Activated B cell treated with CpG ODN at 0.5 μM for 24 hours (primary cell): ENCODE measurements at regions of chr2 and their contacts with region 1.

Region 1: DNA sequence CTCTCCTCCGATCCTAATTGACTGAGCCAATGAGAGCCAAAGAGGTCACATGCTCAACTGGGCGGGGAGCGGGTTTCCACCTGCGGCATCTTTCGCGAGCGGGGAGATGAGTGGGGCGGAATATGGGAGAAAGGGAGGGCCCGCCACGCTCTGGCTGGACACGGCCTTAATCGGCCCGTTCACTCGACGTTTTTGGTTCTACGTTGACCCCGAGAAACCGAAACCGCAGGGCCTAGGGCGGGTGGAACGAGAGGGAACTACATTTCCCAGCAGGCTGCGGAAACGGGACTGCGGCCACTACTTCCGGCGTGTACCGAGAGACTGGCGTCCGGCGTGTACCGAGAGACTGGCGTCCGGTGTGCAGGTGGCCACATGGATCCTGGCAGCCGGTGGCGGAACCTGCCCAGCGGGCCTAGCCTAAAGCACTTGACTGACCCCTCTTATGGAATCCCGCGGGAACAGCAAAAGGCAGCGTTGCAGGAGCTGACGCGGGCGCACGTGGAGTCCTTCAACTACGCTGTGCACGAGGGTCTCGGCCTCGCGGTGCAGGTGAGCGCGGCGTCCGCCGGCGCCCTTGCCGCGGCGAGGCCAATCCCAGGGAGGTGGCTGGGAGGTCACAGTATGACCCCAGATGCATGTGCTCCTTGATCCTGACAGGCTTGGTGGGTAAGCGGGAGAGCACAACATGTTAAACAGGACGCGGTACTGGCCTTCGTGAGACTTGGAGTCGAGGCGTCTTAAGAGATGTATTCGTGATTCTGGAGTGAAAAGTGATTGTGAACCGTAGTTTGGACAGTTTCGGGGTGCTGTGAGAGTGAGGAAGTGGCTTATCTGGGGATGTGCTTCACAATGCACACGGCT is at the start of gene POLR1B:
- DNase-seq: peak; percentile 72
- ATAC-seq: peak; percentile 77
- H3K4me3 Mint-ChIP-seq: no peak within 1 kb of the TSS
- H3K27ac Mint-ChIP-seq: no peak within 1 kb of the TSS
- H3K4me1 Mint-ChIP-seq: peaks cover 19% of the 10 kb centered on the region
- H3K27me3 Mint-ChIP-seq: no peaks in the 10 kb centered on the region
- CTCF ChIP-seq: no peak
- total RNA-seq, gene POLR1B: 43.1 and 48.8 TPM in 2 replicates

Region 2: DNA sequence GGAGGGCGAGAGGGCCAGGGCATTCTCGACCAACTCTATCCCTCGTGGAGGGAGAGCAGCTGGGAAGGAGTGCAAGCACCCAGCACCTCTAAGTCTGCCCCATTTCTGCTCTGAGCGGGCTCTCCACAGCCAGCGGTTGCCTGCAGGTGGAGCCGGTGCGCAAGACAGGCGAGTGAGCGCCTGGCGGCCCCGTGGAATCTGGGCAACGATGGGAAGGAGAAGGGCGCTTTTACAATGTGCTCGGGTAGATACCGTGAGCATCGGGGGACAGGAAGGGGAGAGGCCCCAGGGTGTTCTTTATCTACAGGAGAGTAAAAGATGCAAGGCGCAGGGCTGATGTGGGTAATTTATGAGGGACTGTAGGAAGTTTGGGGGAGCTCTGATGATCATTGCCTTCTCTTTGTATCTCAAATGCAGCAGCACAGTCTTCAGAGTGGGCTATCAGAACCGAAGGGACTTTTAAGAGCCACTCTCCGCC is 61.3 kb before region 1 on chr2:
- CTCF ChIA-PET with region 1: no interaction called
- POLR2A ChIA-PET with region 1: interaction called, 6 read pairs
- intact Hi-C with region 1: loop called (anchors 1 kb)
- DNase-seq: peak; percentile 71
- ATAC-seq: peak; percentile 73
- H3K4me3 Mint-ChIP-seq: peak overlapping the region; percentile 98
- H3K27ac Mint-ChIP-seq: peak overlapping the region; percentile 97
- H3K4me1 Mint-ChIP-seq: peaks cover 22% of the 10 kb centered on the region
- H3K27me3 Mint-ChIP-seq: no peaks in the 10 kb centered on the region
- CTCF ChIP-seq: no peak

Region 3: GRCh38 chr2:112566104-112566503 is 23.8 kb after region 1 on chr2:
- CTCF ChIA-PET with region 1: no interaction called
- POLR2A ChIA-PET with region 1: no interaction called
- intact Hi-C with region 1: no loop called
- DNase-seq: no peak
- ATAC-seq: no peak
- H3K4me3 Mint-ChIP-seq: no peak overlapping the region
- H3K27ac Mint-ChIP-seq: no peak overlapping the region
- H3K4me1 Mint-ChIP-seq: no peaks in the 10 kb centered on the region
- H3K27me3 Mint-ChIP-seq: no peaks in the 10 kb centered on the region
- CTCF ChIP-seq: no peak